ENCODE measurements at regions of chr1 and their contacts with region 1.

Region 1: GRCh38 chr1:154272217-154272998 is at the start of gene HAX1:
- DNase-seq: peak; percentile 94 to 97 (median 96)
- ATAC-seq: peak; percentile 93 to 94
- H3K4me3 ChIP-seq: peak within 1 kb of the TSS; percentile 88
- H3K27ac ChIP-seq: peak within 1 kb of the TSS; percentile 96
- H3K4me1 ChIP-seq: no peaks in the 10 kb centered on the region
- H3K27me3 ChIP-seq: no peaks in the 10 kb centered on the region
- total RNA-seq, gene HAX1: 116 to 152 (median 133) TPM

Region 2: DNA sequence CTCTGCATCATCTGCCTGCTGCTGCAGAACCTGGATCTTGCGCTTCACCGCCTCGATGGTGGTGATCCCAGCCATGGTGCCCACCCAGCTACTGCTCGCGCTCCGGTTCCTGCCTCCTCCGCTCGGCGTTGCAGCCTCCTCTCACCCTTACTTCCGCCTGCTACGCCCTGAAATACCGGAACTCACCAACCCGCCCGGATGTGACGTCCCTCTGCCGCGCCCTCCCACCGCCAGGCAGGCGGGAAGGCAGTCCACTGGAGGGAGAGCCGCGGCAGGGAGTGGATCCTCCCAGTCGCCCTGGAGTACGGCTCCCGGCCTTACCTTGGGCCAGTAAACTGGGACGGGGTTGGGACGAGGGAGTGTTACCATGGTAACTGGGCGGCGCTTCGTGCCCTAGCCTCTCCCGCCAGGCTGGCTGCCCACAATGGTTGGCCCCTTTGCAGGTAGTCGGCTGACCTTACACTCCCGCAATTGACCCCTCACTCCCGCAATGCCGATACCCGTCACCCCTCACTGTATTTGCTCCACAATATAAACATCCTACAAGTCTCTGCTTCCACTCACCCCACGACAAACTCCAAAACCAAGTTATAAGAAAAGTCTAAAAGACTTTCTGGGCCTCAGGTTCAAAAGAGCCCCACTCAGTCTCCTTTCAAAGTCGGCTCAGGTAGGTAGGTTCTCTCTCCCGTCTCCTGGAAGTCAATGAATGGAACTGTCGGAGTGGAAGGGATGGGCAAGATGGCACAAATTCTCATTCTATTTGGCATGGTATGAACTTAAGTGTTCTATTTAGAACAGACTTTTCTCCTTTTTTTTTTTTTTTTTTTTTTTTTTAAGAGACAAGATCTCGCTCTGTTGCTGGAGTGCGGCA is 89.1 kb before region 1 on chr1:
- intact Hi-C with region 1: loop called in 1 of 4 experiments (anchors 10 kb)
- DNase-seq: peak; percentile 96 to 98 (median 98)
- ATAC-seq: peak; percentile 95 to 96
- H3K4me3 ChIP-seq: peak overlapping the region; percentile 82
- H3K27ac ChIP-seq: peak overlapping the region; percentile 82
- H3K4me1 ChIP-seq: peaks cover 9% of the 10 kb centered on the region
- H3K27me3 ChIP-seq: no peaks in the 10 kb centered on the region

Measured in right cardiac atrium (tissue), 5 donors.